Sciatic nerve (tissue), 2 donors: ENCODE measurements at regions of chr9 and their contacts with region 1.

Region 1: GRCh38 chr9:23606107-23606506 is 219.9 kb downstream of the ELAVL2 start:
- DNase-seq: no peak
- ATAC-seq: no peak

Region 2: DNA sequence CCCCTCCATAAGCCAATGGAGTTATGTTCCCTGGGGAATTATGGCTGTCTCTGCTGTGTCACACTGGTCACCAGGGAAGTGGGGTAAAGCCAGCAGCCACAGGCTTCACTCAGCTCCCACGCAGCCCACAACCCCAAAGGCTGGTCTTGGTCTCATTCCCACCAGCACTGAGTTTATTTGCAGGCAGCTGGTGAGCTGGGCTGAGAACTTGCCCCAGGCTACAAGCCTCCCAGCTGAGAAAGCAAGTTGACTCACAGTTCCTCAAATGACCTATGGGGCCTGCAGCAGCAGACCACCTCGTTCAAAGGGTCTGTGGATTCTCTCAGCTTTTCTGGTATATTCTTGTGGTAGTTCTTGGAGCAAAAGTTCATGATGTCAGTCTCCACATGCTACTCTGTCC is 248.5 kb before region 1 on chr9:
- intact Hi-C with region 1: loop called (anchors 5 kb)
- DNase-seq: no peak
- ATAC-seq: no peak

Region 3: GRCh38 chr9:23477908-23478307 is 128.2 kb before region 1 on chr9:
- intact Hi-C with region 1: no loop called
- DNase-seq: no peak
- ATAC-seq: no peak